ENCODE measurements at regions of chr7 and their contacts with region 1.

Region 1: GRCh38 chr7:107168233-107169119 is at the start of gene HBP1:
- DNase-seq: peak; percentile 98
- ATAC-seq: peak; percentile 82
- H3K4me3 Mint-ChIP-seq: peak within 1 kb of the TSS; percentile 91
- H3K27ac Mint-ChIP-seq: peak within 1 kb of the TSS; percentile 100
- H3K4me1 Mint-ChIP-seq: peaks cover 32% of the 10 kb centered on the region
- H3K27me3 Mint-ChIP-seq: no peaks in the 10 kb centered on the region
- total RNA-seq, gene HBP1: 17.8 to 25.4 TPM

Region 2: DNA sequence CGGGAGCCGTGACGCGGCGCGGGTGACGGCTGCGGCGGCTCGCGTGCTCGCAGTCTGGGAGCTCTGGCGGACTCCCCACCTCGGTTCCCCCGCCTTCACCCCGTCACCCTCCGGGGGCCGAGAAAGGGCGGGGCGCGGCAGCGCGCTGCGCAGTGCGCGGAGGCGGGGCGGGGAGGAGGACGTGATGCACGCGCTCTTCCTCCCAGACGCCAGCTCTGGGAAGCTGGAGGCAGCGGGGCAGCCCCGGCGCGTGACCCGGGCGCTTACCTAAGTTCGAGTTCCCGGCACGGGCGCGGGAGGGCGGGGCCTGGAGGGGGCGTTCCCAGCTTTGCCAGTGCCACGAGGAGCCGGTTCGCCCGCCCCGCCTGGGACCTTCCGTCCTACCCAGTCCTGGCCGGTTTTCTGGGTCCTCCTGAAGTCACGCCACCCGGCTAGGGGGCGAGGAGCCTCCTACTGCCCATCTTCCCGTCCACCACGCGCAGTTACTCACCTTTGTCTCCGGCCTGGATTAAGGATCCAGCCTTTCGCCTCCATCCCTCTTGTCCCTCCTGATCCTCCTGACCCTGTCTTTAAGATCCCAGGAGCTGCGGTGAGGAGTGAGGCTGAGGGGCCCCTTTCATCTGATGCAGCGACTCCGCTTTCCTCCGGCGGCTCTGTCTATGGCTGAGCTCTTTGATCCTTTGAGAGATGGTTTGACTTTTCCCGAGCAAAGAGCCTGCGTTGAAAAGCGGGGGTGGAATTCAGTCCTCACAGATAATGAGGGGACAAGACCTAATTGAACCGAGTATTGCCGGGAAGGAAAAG is 883.2 kb before region 1 on chr7:
- CTCF ChIA-PET with region 1: no interaction called
- POLR2A ChIA-PET with region 1: interaction called, 18 read pairs
- intact Hi-C with region 1: no loop called
- DNase-seq: peak; percentile 100
- ATAC-seq: peak; percentile 80
- H3K4me3 Mint-ChIP-seq: peak overlapping the region; percentile 94
- H3K27ac Mint-ChIP-seq: peak overlapping the region; percentile 99
- H3K4me1 Mint-ChIP-seq: peaks cover 45% of the 10 kb centered on the region
- H3K27me3 Mint-ChIP-seq: no peaks in the 10 kb centered on the region

Region 3: GRCh38 chr7:106717955-106718871 is 450.3 kb before region 1 on chr7:
- CTCF ChIA-PET with region 1: no interaction called
- POLR2A ChIA-PET with region 1: no interaction called
- intact Hi-C with region 1: loop called in 1 of 2 experiments (anchors 1 kb)
- DNase-seq: peak; percentile 90
- ATAC-seq: peak; percentile 98
- H3K4me3 Mint-ChIP-seq: no peak overlapping the region
- H3K27ac Mint-ChIP-seq: no peak overlapping the region
- H3K4me1 Mint-ChIP-seq: peaks cover 13% of the 10 kb centered on the region
- H3K27me3 Mint-ChIP-seq: no peaks in the 10 kb centered on the region

Region 4: DNA sequence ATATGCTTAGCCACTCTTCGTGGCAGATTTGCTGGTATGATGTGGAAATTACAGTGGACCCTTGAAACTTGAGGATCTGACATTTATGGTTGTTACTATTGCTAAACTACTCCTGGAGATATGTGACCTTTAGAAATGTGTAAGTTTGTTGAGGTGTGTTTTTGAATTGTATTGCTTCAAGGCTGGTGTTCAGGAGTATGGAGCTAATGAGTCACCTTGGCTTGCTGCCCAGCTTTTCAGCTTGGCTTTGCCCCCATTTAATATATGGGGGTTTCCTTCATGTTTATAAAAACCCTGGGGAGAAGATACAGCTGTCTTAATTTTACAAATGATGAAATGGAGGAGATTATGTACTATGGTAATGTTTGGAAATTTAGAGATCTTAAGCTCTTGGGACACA is 11.9 kb after region 1 on chr7:
- CTCF ChIA-PET with region 1: interaction called, 8 read pairs
- POLR2A ChIA-PET with region 1: interaction called, 20 read pairs
- intact Hi-C with region 1: loop called (anchors 1 kb)
- DNase-seq: peak; percentile 87
- ATAC-seq: peak; percentile 77
- H3K4me3 Mint-ChIP-seq: peak overlapping the region; percentile 12
- H3K27ac Mint-ChIP-seq: peak overlapping the region; percentile 88
- H3K4me1 Mint-ChIP-seq: peaks cover 48% of the 10 kb centered on the region
- H3K27me3 Mint-ChIP-seq: no peaks in the 10 kb centered on the region

Region 5: GRCh38 chr7:107743567-107744344 is 575.3 kb after region 1 on chr7 and contains the start of gene CBLL1:
- CTCF ChIA-PET with region 1: no interaction called
- POLR2A ChIA-PET with region 1: interaction called, 23 read pairs
- intact Hi-C with region 1: loop called (anchors 1 to 2 kb)
- DNase-seq: peak; percentile 99
- ATAC-seq: peak; percentile 94
- H3K4me3 Mint-ChIP-seq: peak within 1 kb of the TSS; percentile 88
- H3K27ac Mint-ChIP-seq: peak within 1 kb of the TSS; percentile 100
- H3K4me1 Mint-ChIP-seq: peaks cover 44% of the 10 kb centered on the region
- H3K27me3 Mint-ChIP-seq: no peaks in the 10 kb centered on the region
- total RNA-seq, gene CBLL1: 36.9 to 57.9 TPM

Region 6: DNA sequence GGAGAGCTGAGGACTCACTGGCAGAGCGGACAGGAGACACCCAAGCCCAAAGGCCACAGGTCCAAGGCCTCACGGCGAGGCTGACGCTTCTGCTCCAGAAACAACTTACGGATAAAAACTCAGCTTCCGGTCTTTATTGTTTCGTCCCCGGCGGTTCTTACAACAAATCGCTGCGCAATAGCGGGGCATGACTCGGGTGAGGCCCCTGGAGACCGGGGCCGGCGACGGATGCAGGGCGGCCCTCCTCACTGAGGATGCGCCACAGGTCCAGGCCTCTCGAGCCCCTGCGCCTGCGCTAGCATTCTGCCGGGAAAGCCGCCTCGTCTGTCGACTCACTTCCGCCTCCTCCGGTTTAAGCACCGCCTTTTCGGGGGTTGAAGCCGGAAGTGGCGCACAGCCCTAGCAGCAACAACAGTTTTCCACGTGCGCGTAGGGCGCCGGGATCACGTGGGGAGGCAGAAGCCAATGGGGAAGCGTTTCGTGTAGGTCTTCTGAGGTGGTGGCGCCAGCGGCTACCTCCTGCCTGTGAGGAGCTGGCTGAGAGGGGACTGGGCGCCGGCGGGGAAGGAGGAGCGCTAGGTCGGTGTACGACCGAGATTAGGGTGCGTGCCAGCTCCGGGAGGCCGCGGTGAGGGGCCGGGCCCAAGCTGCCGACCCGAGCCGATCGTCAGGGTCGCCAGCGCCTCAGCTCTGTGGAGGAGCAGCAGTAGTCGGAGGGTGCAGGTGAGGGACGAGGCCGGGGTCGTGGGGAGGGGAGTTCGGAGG is 1401.1 kb after region 1 on chr7 and contains the starts of genes DNAJB9 and THAP5:
- CTCF ChIA-PET with region 1: no interaction called
- POLR2A ChIA-PET with region 1: no interaction called
- intact Hi-C with region 1: loop called in 1 of 2 experiments (anchors 5 kb)
- DNase-seq: peak; percentile 99
- ATAC-seq: peak; percentile 91
- H3K4me3 Mint-ChIP-seq: peak within 1 kb of the TSS; percentile 98
- H3K27ac Mint-ChIP-seq: peak within 1 kb of the TSS; percentile 99
- H3K4me1 Mint-ChIP-seq: peaks cover 40% of the 10 kb centered on the region
- H3K27me3 Mint-ChIP-seq: no peaks in the 10 kb centered on the region
- total RNA-seq, gene DNAJB9: 8.3 to 8.4 TPM
- total RNA-seq, gene THAP5: 30.1 to 43.4 TPM

Measured in activated CD4-positive, alpha-beta T cell treated with anti-CD3 and anti-CD28 coated beads for 36 hours (primary cell).